Activated naive CD4-positive, alpha-beta T cell treated with anti-CD3 and anti-CD28 coated beads for 36 hours (primary cell): ENCODE measurements at regions of chr17 and their contacts with region 1.

Region 1: GRCh38 chr17:44775136-44775837 is 16.5 kb downstream of the ADAM11 start:
- DNase-seq: peak; percentile 99
- H3K4me3 Mint-ChIP-seq: peak overlapping the region; percentile 83
- H3K27ac Mint-ChIP-seq: no peak overlapping the region
- H3K4me1 Mint-ChIP-seq: peaks cover 2% of the 10 kb centered on the region
- H3K27me3 Mint-ChIP-seq: peaks cover 7% of the 10 kb centered on the region

Region 2: GRCh38 chr17:44733753-44734152 is 41.5 kb before region 1 on chr17:
- CTCF ChIA-PET with region 1: no interaction called
- intact Hi-C with region 1: no loop called
- DNase-seq: no peak
- H3K4me3 Mint-ChIP-seq: no peak overlapping the region
- H3K27ac Mint-ChIP-seq: no peak overlapping the region
- H3K4me1 Mint-ChIP-seq: no peaks in the 10 kb centered on the region
- H3K27me3 Mint-ChIP-seq: no peaks in the 10 kb centered on the region

Region 3: DNA sequence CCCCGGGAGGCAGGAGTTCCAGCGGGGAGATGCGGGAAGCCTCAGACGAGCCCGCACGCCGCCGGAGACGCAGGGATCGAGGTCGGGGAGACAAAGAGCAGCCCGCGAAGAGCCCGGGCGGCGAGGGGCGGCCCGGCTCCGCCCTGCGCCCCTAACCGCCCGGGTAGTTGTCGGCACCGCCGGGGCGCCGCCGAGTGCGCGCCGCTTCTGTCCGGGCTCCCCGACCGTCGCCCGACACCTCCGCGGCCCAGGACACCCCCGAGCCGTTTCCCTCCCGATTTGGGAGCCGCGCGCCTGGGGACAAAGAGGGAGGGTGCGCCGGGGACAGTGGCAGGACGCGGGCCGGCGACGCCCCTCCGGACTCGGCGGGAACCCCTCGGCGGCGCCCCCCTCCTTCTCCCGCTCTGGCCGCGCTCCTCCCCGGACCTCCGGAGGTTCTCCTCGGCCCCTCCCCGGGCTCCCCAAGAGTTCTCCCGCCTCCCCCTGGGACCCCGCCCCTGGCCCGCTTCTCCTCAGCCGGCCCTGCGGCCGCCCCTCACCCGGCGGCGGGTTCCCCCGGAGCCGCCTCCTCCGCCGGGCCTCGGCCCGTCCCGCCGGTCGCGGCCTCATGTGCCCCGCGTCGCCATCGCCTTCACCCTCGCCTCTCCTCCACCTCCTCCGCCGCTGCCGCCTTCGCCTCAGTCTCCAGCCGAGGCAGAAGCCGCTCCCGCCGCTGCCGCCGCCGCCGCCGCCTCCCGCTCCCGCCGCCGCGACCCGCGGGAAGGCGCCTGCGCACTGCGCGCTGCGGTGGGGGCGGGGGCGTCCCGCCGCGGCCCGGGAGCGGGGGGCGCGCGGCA is 54.5 kb after region 1 on chr17 and contains the start of gene GJC1:
- CTCF ChIA-PET with region 1: interaction called, 4 read pairs
- intact Hi-C with region 1: loop called (anchors 1 kb)
- DNase-seq: peak; percentile 25
- H3K4me3 Mint-ChIP-seq: peak within 1 kb of the TSS; percentile 77
- H3K27ac Mint-ChIP-seq: no peak within 1 kb of the TSS
- H3K4me1 Mint-ChIP-seq: peaks cover 10% of the 10 kb centered on the region
- H3K27me3 Mint-ChIP-seq: peaks cover 40% of the 10 kb centered on the region
- total RNA-seq, gene GJC1: 2.5 TPM

Region 4: DNA sequence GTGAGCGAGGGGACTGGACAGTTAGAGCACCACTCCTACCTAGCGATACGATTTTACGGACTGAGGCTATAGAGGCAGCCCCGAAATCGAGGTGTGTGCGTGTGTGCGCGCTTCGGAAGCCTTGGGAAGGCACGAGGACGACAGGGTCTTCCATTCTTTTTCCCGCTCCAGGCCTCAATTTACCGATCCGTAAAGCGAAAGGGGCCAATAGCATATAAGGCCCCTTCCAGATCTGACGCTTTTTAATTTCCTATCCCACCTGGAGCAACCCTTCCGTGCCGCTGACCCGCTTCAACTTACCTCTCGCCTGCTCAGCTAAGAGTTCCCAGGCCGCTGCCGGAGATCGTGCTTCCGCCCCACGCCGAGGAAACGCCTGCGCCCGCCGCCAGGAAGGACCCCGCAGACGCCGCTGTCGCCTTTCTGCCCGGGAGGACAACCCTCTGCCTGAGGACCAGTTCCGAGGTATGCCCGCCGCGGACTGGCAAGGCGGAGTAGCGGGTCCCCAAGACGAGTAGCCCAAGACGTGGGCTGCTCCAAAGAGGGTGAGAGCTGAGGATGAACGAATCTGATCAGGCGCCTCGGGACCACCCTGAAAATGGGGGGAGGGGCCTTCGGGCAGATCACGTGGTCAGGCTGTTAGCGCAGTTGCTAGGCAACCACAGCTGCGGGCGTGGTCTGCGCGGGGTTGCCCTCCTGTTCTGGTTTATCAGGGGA is 123.9 kb after region 1 on chr17 and contains the start of gene EFTUD2:
- CTCF ChIA-PET with region 1: interaction called, 5 read pairs
- intact Hi-C with region 1: loop called (anchors 1 kb)
- DNase-seq: peak; percentile 94
- H3K4me3 Mint-ChIP-seq: peak within 1 kb of the TSS; percentile 90
- H3K27ac Mint-ChIP-seq: peak within 1 kb of the TSS; percentile 97
- H3K4me1 Mint-ChIP-seq: peaks cover 25% of the 10 kb centered on the region
- H3K27me3 Mint-ChIP-seq: peaks cover 2% of the 10 kb centered on the region
- total RNA-seq, gene EFTUD2: 170 to 176 TPM

Region 5: DNA sequence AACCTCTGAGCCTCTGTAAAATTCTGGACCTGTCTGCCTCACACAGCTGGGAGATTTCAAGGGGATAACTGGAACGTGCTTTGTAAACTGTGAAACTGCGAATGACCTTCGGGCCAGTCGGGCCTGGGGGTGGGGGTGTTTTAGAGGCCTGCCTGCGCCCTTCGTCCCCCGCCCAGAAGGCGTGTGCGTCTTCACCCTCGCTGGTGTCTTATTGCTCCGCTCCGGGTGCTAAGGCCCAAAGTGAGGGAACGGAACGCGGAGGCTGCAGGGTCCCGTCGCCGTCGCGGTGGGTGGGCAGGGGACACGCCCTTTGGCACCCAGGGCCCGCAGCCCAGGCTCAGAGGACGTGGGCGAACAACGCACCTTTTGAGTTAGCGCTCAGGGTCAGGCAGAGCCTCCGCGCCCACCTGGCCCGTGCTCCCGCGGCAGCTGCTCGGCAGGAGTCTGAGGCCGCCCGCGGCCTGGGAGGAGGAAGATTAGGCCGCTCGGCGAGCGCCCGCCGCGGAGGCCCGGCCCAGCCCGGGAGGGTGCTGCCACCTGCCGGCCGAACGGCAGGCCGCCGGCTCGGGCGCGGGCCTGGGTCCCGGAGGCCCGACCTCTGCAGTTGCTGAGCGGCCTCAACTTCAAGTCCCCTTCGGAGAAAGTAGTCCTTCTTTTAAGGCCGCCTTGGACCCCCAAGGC is 246.5 kb after region 1 on chr17:
- CTCF ChIA-PET with region 1: interaction called, 8 read pairs
- intact Hi-C with region 1: loop called (anchors 1 kb)
- DNase-seq: peak; percentile 61
- H3K4me3 Mint-ChIP-seq: no peak overlapping the region
- H3K27ac Mint-ChIP-seq: no peak overlapping the region
- H3K4me1 Mint-ChIP-seq: peaks cover 16% of the 10 kb centered on the region
- H3K27me3 Mint-ChIP-seq: peaks cover 34% of the 10 kb centered on the region

Region 6: GRCh38 chr17:45161019-45161825 is 385.9 kb after region 1 on chr17:
- CTCF ChIA-PET with region 1: no interaction called
- intact Hi-C with region 1: loop called (anchors 1 kb)
- DNase-seq: peak; percentile 99
- H3K4me3 Mint-ChIP-seq: peak overlapping the region; percentile 96
- H3K27ac Mint-ChIP-seq: peak overlapping the region; percentile 96
- H3K4me1 Mint-ChIP-seq: peaks cover 33% of the 10 kb centered on the region
- H3K27me3 Mint-ChIP-seq: no peaks in the 10 kb centered on the region